Astrocyte of the cerebellum (primary cell): ENCODE measurements at regions of chr11 and their contacts with region 1.

Region 1: GRCh38 chr11:60899046-60899936 is 7.1 kb downstream of the PRPF19 start:
- DNase-seq: no peak
- H3K4me3 ChIP-seq: no peak overlapping the region
- CTCF ChIP-seq: peak; percentile 97

Region 2: DNA sequence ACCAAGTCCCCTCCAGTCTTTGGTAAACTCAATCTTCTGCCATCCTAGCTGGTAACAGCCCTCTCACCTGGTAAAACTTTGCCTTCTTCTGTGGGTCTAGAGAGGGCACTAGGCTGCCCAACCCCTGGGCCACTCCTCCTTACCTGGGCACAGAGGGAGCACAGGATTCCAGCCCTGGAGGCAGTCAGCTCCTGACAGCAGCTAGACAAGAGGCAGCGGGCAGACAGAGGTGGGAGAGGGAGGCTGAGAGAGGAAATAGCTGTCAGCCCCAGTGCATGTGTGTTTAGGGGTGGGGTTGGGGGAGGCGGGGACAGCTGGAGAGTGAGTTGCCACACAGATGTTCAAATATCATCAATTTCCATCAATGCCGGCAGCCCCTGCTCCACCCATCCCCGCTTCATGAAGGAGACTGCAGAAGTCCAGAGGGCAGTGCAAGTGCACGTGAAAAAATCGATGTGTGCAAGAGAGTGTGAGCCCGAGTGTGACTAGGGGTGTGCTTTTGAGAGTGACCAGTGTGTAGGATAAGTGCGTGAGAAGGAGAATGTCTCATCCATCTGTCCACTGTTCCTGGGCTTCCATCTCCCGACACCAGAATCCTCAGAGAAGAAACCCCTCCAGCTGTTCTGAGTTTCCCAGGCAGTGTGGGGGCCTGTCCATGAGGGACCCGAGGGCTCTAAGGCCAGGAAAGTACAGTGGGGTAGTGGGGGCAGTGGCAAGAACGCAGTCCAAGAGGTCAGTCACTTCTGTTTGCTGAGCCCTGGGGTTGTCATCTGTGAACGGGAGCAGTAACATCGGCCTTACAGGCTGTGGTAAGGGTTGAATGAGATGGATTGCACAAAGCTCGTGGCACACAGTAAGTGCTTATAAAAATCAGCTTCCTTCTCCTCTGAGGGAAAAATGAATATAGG is 43.3 kb before region 1 on chr11 and contains the start of gene PTGDR2:
- in situ Hi-C with region 1: loop called (anchors 5 kb)
- DNase-seq: no peak
- H3K4me3 ChIP-seq: no peak within 1 kb of the TSS
- CTCF ChIP-seq: no peak

Region 3: DNA sequence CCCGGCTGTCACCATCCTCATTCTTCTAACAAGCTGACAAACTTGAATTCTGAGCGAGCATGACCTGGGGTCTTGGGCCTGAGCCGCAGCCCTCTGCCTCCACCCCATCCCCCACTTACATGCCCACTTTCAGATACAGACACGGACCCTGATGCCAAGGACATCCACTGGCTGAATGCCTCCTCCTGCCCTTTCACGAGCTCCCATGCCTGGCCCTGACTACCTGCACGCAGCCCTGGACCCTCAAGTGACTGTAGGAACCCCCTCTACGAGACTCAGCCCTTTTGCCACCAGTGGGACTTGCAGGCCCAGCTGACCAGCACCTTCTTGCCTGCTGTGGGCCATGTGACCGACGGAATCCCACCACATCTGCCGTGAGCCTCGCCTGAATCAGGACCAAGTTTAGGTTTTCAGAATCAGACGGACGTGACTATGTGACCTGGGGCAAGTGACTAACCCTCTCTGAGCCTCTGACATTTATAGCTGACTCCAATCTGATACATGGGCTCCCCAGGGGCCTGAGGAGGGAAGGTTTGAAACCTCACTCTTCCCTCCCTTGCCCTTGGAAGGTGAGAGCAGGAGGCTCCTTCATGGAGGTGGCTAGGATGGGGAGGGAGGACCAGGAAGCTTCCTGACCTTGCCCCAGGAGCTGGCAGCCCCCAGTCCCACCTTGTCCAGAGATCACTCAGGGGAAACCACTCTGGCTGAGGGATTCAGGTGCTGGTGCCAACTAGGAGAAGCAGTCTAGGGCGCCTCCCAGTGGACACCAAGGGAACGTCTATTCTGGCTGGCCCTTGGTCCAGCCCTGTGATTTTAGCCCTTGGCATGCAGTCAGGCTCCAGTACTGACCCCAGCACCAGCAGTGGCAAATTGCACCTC is 728.5 kb after region 1 on chr11:
- in situ Hi-C with region 1: no loop called
- DNase-seq: peak; percentile 36
- H3K4me3 ChIP-seq: no peak overlapping the region
- CTCF ChIP-seq: peak; percentile 88